IMR-90 (cell line): ENCODE measurements at regions of chr12 and their contacts with region 1.

Region 1: DNA sequence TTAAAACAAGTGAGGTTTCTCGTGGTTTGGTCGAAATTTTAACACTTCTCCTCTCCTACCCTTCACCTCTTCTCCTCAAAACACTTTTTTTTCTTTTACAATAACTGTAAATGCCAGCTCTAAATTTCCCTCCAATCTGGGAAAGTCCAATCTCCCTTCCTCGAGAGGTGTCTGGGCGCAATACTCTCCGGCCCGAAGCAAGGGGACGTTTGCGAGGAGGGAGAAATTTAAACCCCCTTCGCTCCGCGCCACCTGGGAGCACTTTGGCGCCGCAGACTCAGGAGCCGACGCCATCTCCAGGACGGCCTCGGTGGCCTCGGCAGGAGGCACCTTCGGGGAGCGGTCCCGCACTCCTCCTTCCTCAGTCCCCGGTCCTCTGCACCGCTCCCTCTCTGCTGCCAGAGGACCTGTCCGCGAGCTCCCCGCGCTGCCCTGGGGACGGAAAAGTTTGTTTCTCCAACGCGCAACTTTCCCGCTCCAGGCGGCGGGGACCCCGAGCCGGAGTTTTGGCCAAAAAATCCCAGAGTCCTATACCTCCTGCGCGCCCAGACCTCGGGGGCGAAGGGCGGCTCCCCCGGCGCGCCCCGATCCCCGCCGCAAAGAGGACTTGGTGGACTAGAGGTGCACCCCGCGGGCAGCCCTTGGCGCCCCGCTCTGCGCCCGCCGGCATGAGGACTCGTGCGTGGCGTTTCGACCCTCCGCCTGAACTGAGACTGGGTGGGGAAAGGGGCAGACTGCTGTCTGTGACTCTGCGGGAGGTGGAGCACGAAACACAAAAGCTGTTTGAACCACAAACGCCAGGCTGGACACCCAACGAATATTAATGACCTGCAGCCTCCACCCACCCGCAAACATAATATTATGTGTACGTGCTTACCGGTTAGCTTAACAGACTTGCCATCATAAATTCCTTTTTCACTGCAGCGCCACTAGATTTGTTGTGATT is 95.2 kb upstream of the HMGA2 start:
- DNase-seq: peak; percentile 5
- ATAC-seq: peak; percentile 78
- H3K4me3 ChIP-seq: peak overlapping the region; percentile 53
- H3K27ac ChIP-seq: no peak overlapping the region; the same call in 1 of the 2 replicates
- H3K4me1 ChIP-seq: no peaks in the 10 kb centered on the region
- H3K27me3 ChIP-seq: peaks cover 13% of the 10 kb centered on the region
- CTCF ChIP-seq: no peak
- POLR2A ChIP-seq: no peak
- RAD21 ChIP-seq: no peak

Region 2: DNA sequence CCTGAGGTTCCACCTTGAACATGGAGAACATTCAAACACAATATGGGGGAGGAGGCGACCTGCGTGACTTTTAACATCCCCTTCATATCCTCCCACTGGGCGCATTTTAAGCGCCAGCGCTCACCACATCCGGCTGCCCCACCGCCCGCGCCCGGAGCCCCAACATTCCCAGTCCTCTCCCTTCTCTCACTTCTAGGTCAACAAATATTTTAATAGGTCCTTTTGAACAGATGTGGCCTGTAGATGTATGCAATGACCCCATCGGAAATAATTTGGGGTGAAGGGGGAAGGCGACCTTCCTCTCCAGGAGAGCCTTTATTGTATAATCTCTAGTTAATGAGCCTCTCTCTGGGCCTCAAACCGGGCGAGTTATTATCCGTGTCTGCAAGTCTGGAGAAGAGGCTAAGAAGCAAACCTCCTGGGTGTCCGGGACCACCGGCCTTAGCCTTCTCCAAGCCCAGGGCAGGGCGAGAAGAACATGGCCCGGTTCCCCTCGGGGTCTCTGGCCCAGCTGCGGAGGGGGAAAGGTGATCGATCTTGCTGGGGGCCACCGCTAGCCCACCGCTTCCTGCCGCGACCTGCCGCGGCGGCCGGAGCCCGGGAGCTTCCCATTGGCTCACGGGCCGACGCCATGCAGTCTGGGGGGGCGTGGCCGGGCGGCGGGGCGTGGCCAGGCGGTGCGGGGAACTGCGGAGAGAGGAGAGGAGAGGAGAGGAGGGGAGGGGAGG is 11.9 kb after region 1 on chr12:
- CTCF ChIA-PET with region 1: no interaction called
- POLR2A ChIA-PET with region 1: interaction called, 12 read pairs
- dilution Hi-C with region 1: no loop called
- in situ Hi-C with region 1: no loop called
- intact Hi-C with region 1: no loop called
- DNase-seq: peak; percentile 74
- ATAC-seq: peak; percentile 98
- H3K4me3 ChIP-seq: peak overlapping the region; percentile 83
- H3K27ac ChIP-seq: peak overlapping the region; percentile 76
- H3K4me1 ChIP-seq: peaks cover 2% of the 10 kb centered on the region; the same call in 1 of the 2 replicates
- H3K27me3 ChIP-seq: no peaks in the 10 kb centered on the region
- CTCF ChIP-seq: no peak
- POLR2A ChIP-seq: peak; percentile 52; the same call in 1 of the 2 replicates
- RAD21 ChIP-seq: no peak